HEK293 (cell line): ENCODE measurements at regions of chr20 and their contacts with region 1.

Region 1: GRCh38 chr20:32779500-32780211 is 17.5 kb downstream of the DNMT3B start:
- H3K4me3 ChIP-seq: no peak overlapping the region
- H3K27ac ChIP-seq: no peak overlapping the region
- H3K4me1 ChIP-seq: peaks cover 3% of the 10 kb centered on the region; the same call in 1 of the 2 replicates
- CTCF ChIP-seq: no peak

Region 2: DNA sequence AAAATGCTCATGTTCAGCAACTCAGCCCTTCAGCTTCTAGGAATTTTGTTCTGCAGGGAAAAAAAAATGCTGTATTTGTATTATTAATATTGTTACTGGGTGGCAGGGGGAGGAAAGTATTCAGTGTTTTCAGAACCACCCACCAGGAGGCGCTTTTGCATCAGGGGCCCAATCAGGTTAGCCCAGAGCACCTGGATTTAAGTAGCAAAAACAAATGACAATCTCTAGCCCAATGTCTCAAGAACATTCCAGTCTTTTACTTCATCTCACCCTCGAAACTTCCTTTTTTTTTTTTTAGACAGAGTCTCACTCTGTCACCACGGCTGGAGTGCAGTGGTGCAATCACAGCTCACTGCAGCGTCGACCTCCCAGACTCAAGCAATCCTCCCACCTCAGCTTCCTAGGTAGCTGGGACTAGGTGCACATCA is 105.3 kb before region 1 on chr20:
- CTCF ChIA-PET with region 1: interaction called, 244 read pairs
- POLR2A ChIA-PET with region 1: interaction called, 13 read pairs
- H3K4me3 ChIP-seq: no peak overlapping the region
- H3K27ac ChIP-seq: no peak overlapping the region
- H3K4me1 ChIP-seq: no peaks in the 10 kb centered on the region
- CTCF ChIP-seq: peak; percentile 59; the same call in 1 of the 2 replicates

Region 3: GRCh38 chr20:32709632-32710121 is 70.0 kb before region 1 on chr20:
- CTCF ChIA-PET with region 1: interaction called, 11 read pairs
- POLR2A ChIA-PET with region 1: no interaction called
- H3K4me3 ChIP-seq: no peak overlapping the region
- H3K27ac ChIP-seq: no peak overlapping the region
- H3K4me1 ChIP-seq: peaks cover 7% of the 10 kb centered on the region; the same call in 1 of the 2 replicates
- CTCF ChIP-seq: no peak

Region 4: DNA sequence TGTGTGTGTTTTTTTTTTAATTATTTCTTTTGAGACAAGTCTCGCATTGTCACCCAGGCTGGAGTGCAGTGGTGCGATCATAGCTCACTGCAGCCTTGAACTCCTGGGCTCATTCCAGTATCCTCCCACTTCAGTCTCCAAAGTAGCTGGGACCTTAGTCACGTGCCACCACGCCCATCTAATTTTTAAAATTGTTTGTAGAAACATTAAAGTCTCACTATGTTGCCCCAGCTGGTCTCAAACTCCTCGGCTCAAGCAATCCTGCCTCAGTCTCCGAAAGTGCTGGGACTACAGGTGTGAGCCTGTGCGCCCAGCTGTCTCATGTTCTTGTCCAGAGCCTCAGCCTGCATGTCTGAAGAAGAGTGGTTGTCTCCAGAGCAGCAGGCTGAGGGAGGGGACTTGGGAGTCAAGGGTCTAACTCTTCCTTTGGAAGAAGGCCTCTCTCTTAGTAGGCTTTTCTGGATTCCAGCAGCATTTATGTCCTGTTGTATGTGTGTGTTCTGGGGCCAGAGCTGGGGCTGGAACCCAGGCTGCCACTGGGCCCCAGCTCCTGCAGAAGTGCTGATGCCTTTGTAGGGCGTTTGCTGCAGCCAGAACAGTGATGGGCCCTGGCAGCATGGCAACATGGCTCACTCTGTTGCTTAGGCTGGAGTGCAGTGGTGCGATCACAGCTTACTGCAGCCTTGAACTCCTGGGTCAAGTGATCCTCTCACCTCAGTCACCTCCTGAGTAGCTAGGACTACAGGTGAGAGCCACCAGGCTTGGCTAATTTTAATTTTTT is 12.0 kb before region 1 on chr20:
- CTCF ChIA-PET with region 1: interaction called, 40 read pairs
- POLR2A ChIA-PET with region 1: interaction called, 5 read pairs
- H3K4me3 ChIP-seq: no peak overlapping the region
- H3K27ac ChIP-seq: no peak overlapping the region
- H3K4me1 ChIP-seq: no peaks in the 10 kb centered on the region; the same call in 1 of the 2 replicates
- CTCF ChIP-seq: no peak

Region 5: GRCh38 chr20:32796981-32797451 is 17.4 kb after region 1 on chr20:
- CTCF ChIA-PET with region 1: interaction called, 13 read pairs
- POLR2A ChIA-PET with region 1: no interaction called
- H3K4me3 ChIP-seq: no peak overlapping the region
- H3K27ac ChIP-seq: no peak overlapping the region
- H3K4me1 ChIP-seq: no peaks in the 10 kb centered on the region
- CTCF ChIP-seq: no peak